OCI-LY7 (cell line): ENCODE measurements at regions of chr5 and their contacts with region 1.

Region 1: GRCh38 chr5:28344803-28345433 is 1306.5 kb upstream of the CDH9 start:
- DNase-seq: peak; percentile 35
- H3K4me3 ChIP-seq: no peak overlapping the region
- H3K27ac ChIP-seq: no peak overlapping the region
- H3K4me1 ChIP-seq: no peaks in the 10 kb centered on the region
- CTCF ChIP-seq: peak; percentile 81

Region 2: GRCh38 chr5:28281351-28281750 is 63.6 kb before region 1 on chr5:
- CTCF ChIA-PET with region 1: no interaction called
- POLR2A ChIA-PET with region 1: no interaction called
- intact Hi-C with region 1: no loop called
- DNase-seq: no peak
- H3K4me3 ChIP-seq: no peak overlapping the region
- H3K27ac ChIP-seq: no peak overlapping the region
- H3K4me1 ChIP-seq: no peaks in the 10 kb centered on the region
- CTCF ChIP-seq: no peak

Region 3: DNA sequence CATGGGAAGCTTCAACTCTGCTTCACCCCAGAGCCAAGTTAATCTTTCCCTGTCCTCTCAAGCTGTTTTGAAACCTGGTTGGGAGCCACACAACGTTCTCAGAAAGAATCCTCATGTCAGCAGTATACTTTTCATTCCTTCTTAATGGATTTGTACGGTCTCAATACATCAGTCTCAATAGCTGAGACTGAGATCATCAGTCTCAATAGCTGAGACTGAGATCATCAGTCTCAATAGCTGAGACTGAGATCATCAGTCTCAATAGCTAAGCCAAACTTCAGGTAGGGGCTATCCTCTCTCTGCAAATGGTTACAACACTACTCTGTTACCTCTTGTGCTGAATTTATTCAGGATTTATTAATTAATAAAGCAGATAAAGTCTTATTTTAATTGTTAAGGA is 10.9 kb after region 1 on chr5:
- CTCF ChIA-PET with region 1: no interaction called
- POLR2A ChIA-PET with region 1: no interaction called
- intact Hi-C with region 1: no loop called
- DNase-seq: no peak
- H3K4me3 ChIP-seq: no peak overlapping the region
- H3K27ac ChIP-seq: no peak overlapping the region
- H3K4me1 ChIP-seq: no peaks in the 10 kb centered on the region
- CTCF ChIP-seq: no peak

Region 4: GRCh38 chr5:28548856-28549255 is 203.9 kb after region 1 on chr5:
- CTCF ChIA-PET with region 1: no interaction called
- POLR2A ChIA-PET with region 1: no interaction called
- intact Hi-C with region 1: no loop called
- DNase-seq: no peak
- H3K4me3 ChIP-seq: no peak overlapping the region
- H3K27ac ChIP-seq: no peak overlapping the region
- H3K4me1 ChIP-seq: no peaks in the 10 kb centered on the region
- CTCF ChIP-seq: no peak

Region 5: GRCh38 chr5:28766565-28767158 is 421.7 kb after region 1 on chr5:
- CTCF ChIA-PET with region 1: no interaction called
- POLR2A ChIA-PET with region 1: no interaction called
- intact Hi-C with region 1: loop called (anchors 5 kb)
- DNase-seq: peak; percentile 40
- H3K4me3 ChIP-seq: no peak overlapping the region
- H3K27ac ChIP-seq: no peak overlapping the region
- H3K4me1 ChIP-seq: no peaks in the 10 kb centered on the region
- CTCF ChIP-seq: peak; percentile 57